ENCODE measurements at regions of chr21 and their contacts with region 1.

Region 1: DNA sequence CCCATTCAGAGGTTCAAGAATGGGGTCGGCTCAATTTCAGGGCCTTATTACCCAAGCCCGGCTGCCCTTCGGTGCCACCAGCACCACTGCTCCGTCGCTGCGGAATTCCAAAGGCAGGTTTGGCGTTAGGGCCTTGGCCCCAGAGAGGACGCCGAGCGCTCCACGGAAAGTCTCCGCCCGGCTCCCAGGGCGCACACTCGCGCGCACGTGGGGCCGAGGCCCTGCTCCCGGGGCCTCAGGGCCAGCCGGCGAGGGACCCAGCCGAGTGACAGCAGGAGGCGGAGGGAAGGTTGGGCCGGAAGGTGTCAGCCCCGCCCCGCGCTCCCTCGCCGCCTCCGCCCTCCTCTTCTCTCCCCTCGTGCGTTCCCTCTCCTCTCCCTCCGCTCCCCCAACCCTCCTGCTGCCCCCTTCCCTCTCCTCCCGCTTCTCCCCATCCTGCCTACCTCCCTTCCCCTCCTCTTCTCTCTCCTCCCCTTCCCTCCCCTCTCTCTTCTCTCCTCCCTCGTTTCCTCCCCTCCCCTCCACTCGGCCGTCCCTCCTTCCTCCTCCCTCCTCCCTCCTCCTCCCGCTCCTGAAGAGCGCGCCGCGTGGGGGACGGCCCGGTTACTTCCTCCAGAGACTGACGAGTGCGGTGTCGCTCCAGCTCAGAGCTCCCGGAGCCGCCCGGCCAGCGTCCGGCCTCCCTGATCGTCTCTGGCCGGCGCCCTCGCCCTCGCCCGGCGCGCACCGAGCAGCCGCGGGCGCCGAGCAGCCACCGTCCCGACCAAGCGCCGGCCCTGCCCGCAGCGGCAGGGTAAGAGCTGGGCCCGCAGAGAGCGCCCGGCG is at the start of gene ETS2:
- DNase-seq: peak; percentile 73
- H3K4me3 Mint-ChIP-seq: peak within 1 kb of the TSS; percentile 94
- H3K27ac Mint-ChIP-seq: peak within 1 kb of the TSS; percentile 93
- H3K4me1 Mint-ChIP-seq: peaks cover 49% of the 10 kb centered on the region
- H3K27me3 Mint-ChIP-seq: no peaks in the 10 kb centered on the region
- total RNA-seq, gene ETS2: 62.8 and 63.9 TPM in 2 replicates

Region 2: GRCh38 chr21:38733973-38734546 is 71.5 kb before region 1 on chr21:
- intact Hi-C with region 1: loop called (anchors 2 kb)
- DNase-seq: peak; percentile 48
- H3K4me3 Mint-ChIP-seq: peak overlapping the region; percentile 74
- H3K27ac Mint-ChIP-seq: no peak overlapping the region
- H3K4me1 Mint-ChIP-seq: peaks cover 20% of the 10 kb centered on the region
- H3K27me3 Mint-ChIP-seq: peaks cover 11% of the 10 kb centered on the region

Region 3: DNA sequence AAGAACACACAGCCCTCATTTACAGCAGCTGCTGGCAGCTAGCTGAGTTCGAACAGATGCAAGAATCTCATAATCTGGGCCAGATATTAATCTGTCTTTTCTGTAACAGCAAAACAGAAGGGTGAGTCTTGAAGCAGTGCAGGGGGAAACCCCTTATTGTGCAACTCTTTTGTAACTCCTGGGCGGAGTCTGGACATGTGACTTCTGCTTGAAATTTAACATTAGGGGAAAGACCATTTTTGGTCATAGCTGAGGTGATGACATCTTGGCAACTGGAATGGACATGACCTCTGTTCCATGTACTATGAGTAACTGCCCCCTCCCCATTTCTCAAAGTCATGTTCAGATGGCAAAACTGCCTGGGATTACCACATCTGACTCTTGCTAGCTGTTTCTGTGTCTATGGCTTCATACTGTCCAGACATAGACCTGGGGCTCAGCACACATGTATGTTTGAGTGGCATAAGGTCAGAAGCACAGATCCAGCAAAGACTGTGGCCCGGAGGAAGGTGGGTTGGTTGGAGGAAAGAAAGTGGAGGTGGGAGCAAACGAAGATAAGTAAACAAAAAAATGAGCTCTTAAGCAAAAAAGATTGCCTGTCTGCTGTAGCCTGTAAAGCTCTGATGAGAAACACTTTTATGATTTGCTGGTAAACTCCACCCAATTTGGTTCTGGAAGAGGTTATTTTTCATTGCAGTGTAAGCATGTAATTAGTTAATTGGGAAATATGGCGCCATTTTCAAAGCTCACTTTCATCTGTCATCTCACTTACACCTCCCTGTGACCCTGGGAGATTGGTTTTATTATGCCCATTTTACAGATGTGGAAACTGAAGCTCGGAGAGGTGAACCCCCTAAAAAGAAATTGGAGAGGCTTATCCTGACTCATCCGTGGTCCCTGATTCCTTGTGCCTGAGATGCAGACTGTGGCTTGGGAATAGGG is 26.3 kb after region 1 on chr21:
- intact Hi-C with region 1: loop called (anchors 1 kb)
- DNase-seq: peak; percentile 59
- H3K4me3 Mint-ChIP-seq: no peak overlapping the region
- H3K27ac Mint-ChIP-seq: peak overlapping the region; percentile 50
- H3K4me1 Mint-ChIP-seq: peaks cover 16% of the 10 kb centered on the region
- H3K27me3 Mint-ChIP-seq: no peaks in the 10 kb centered on the region

Region 4: DNA sequence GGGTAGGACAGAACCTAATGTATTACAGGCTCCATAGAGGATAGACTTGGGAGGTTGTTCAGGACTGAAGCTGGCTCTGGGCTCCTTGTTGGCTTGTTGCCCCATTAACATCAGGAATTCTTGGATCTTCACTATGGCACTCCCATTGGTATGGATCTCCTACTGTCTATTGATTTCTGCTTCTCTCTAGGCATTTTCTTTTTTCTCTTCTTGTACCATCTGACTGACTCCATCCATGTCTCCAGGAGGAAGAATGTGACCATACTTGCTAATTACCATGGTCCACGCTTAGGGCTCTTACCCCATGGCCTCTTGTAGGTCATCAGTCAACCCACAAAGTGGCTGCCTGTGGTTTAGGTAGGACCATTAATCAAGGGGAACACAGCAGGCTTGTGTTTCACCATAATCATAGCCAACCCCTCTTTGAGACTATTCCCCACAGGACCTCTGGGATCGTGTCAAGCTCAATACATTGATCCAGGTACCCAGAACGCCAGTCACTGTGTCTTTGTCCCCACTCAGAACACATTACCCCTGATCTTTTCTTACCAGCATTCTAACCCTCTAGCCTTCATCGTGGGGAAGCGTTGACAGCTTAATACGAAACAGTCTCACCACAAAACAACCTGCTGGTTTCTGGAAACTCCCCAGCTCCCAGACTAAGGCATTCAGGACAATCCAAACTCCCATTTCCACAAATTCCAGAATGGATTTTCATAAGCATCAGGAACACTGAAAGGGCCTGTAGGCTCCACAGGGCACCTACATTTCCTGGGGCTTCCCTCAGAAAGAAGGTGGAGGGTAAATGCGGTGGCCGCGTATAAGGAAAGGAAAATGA is 97.3 kb after region 1 on chr21:
- intact Hi-C with region 1: no loop called
- DNase-seq: no peak
- H3K4me3 Mint-ChIP-seq: no peak overlapping the region
- H3K27ac Mint-ChIP-seq: no peak overlapping the region
- H3K4me1 Mint-ChIP-seq: peaks cover 14% of the 10 kb centered on the region
- H3K27me3 Mint-ChIP-seq: no peaks in the 10 kb centered on the region

Region 5: GRCh38 chr21:38913120-38913892 is 107.8 kb after region 1 on chr21:
- intact Hi-C with region 1: loop called (anchors 5 kb)
- DNase-seq: no peak
- H3K4me3 Mint-ChIP-seq: no peak overlapping the region
- H3K27ac Mint-ChIP-seq: no peak overlapping the region
- H3K4me1 Mint-ChIP-seq: peaks cover 23% of the 10 kb centered on the region
- H3K27me3 Mint-ChIP-seq: peaks cover 1% of the 10 kb centered on the region

Region 6: GRCh38 chr21:38945545-38946245 is 140.2 kb after region 1 on chr21:
- intact Hi-C with region 1: no loop called
- DNase-seq: no peak
- H3K4me3 Mint-ChIP-seq: no peak overlapping the region
- H3K27ac Mint-ChIP-seq: no peak overlapping the region
- H3K4me1 Mint-ChIP-seq: no peaks in the 10 kb centered on the region
- H3K27me3 Mint-ChIP-seq: no peaks in the 10 kb centered on the region

Region 7: GRCh38 chr21:38979228-38980121 is 173.9 kb after region 1 on chr21:
- intact Hi-C with region 1: loop called (anchors 1 kb)
- DNase-seq: no peak
- H3K4me3 Mint-ChIP-seq: no peak overlapping the region
- H3K27ac Mint-ChIP-seq: peak overlapping the region; percentile 82
- H3K4me1 Mint-ChIP-seq: peaks cover 63% of the 10 kb centered on the region
- H3K27me3 Mint-ChIP-seq: no peaks in the 10 kb centered on the region

Region 8: DNA sequence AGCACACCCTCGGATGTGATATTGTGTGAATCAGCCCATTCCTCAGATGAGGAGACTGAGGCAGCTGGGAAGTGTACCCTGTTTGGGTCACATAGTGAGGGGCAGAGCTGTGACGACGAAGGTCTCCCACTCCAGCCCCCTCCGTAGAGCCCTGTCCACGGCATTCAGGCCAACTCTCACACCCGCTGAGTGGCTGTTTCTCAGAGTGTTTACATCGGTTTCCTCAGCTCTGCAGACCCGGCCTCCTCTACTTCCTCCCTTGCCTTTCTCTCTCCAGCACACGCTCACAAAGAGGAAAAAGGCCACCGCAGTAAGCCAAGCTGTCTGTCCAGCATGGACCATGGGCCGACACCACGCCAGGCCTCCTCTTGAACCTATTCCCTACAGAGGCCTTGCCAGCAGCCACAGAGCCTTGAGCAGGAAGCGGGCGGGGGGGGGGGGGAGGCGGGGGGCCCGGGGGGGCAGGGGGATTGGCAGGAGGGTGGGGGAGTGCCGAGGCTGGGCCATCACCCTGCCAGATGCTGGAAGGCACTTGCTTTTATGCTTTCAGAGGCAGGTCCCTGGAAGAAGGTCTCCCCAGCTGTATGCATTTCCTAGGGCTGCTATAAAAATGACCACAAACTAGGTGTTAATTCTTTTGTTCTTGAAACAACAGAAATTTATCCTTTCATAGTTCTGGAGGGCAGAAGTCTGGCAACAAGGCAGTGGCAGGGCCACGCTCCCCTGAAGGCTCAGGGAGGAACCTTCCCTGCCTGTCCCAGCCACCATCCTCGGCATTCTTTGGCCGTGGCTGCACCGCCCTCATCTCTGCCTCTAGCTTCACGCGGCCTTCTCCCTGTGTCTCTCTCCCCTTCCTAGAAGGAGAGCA is 199.3 kb after region 1 on chr21:
- intact Hi-C with region 1: loop called (anchors 5 kb)
- DNase-seq: no peak
- H3K4me3 Mint-ChIP-seq: peak overlapping the region; percentile 59
- H3K27ac Mint-ChIP-seq: peak overlapping the region; percentile 96
- H3K4me1 Mint-ChIP-seq: peaks cover 51% of the 10 kb centered on the region
- H3K27me3 Mint-ChIP-seq: no peaks in the 10 kb centered on the region

Region 9: DNA sequence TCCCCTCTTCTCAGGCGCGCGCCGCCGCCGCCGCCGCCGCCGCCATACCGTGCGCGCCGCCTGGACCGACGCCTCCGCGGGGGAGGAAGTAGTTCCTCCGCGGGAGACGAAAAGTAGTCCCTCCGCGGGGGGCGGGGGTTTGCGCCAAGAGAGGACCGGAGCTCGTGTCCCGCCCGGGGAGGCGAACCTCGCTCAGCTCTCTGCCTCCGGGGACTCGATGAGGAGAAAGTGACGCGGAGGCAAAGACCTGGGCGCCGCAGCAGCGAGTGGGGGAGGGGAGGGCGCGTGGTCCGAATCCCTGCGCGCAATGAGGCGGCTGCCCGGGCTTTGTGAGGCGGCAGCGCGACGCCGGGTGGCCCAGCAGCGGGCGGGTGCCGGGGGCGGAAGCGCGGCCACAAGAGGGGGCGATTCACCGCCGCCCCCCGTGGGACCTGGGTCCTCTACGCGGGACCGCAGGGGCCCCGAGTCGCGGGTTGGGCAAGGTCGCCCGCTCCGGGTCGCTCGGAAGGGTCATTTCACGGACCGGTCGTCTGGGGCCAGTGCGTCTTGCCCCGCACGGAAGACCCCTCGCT is 508.1 kb after region 1 on chr21 and contains the start of gene BRWD1:
- intact Hi-C with region 1: loop called (anchors 10 kb)
- DNase-seq: peak; percentile 83
- H3K4me3 Mint-ChIP-seq: peak within 1 kb of the TSS; percentile 93
- H3K27ac Mint-ChIP-seq: peak within 1 kb of the TSS; percentile 98
- H3K4me1 Mint-ChIP-seq: peaks cover 31% of the 10 kb centered on the region
- H3K27me3 Mint-ChIP-seq: no peaks in the 10 kb centered on the region
- total RNA-seq, gene BRWD1: 34.8 and 36.0 TPM in 2 replicates

Measured in activated T-helper 2 cell treated with anti-CD3 and anti-CD28 coated beads, Interferon-gamma antibody, Interleukin-2, Interleukin-4, amounts not matched to agents 10 μg/mL and 5 μg/mL and 100 μg/mL, durations not matched to agents 14 hours and 24 hours and 36 hours (primary cell).